ENCODE measurements at regions of chrX and their contacts with region 1.

Region 1: DNA sequence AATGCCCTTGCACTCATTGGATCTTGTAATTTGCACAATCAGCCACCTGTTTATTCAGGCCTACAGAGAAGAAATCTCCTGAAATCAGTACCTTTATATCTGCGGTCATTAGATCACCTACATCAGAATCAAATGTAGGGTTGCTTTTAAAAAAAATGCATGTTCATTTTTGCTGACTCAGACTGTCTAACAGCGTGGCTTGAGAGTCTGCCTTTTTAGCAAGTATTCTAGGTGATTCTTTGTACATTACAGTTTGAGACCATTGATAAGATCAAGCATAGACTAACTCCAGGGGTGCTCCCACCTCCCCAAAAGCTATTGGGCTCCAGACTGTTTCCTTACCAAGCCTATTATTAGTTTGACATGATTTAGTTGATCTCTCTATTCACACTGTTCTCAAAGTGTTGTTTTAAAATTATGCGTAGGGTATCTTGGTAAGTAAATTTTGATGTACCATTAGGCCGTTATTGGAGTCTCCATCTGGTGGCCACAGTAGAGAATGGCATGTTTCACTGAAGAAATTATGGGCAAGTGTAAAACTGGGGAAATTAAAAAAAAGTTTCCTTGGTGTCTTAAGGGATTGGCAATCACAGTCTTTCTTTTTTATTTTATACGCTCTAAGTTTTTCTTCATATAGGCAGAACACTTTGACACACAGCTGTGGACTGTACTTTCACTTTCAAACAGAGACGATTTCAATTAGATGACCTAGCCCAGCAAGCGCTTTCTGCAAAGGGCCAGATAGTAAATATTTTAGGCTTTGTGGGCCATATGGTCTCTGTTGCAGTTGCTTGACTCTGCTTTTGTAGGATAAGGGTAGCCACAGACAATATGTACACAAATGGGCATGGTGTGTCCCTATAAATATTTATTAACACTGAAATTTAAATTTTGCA is 33.7 kb upstream of the MSL3 start:
- DNase-seq: peak in 1 of 2 experiments; percentile 17
- H3K4me3 ChIP-seq: no peak overlapping the region
- H3K4me3 Mint-ChIP-seq: no peak overlapping the region
- H3K27ac Mint-ChIP-seq: no peak overlapping the region
- H3K4me1 ChIP-seq: no peaks in the 10 kb centered on the region
- H3K4me1 Mint-ChIP-seq: no peaks in the 10 kb centered on the region
- H3K27me3 ChIP-seq: no peaks in the 10 kb centered on the region
- H3K27me3 Mint-ChIP-seq: no peaks in the 10 kb centered on the region
- CTCF ChIP-seq: peak; percentile 42 to 53

Region 2: DNA sequence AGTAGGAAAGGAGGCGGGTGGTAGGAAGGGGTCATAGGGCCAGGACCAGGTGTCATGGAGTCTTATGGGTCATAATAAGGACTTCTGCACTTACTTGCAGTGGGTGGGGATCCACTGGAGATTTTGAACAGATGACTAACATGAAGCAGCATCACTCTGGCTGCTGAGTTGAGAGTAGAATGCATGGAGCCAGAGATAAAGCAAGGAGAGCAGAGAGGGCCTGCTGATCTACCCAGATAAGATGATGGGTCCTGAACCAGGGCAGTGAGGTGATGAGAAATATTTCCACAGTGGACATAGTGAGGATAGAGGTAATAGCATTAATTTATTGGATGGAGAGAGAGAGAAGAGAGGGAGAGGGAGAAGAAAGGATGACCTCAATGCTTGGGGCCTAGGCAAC is 565.2 kb before region 1 on chrX:
- CTCF ChIA-PET with region 1: no interaction called
- POLR2A ChIA-PET with region 1: no interaction called
- intact Hi-C with region 1: no loop called
- DNase-seq: no peak
- H3K4me3 ChIP-seq: no peak overlapping the region
- H3K4me3 Mint-ChIP-seq: no peak overlapping the region
- H3K27ac Mint-ChIP-seq: no peak overlapping the region
- H3K4me1 ChIP-seq: no peaks in the 10 kb centered on the region
- H3K4me1 Mint-ChIP-seq: no peaks in the 10 kb centered on the region
- H3K27me3 ChIP-seq: no peaks in the 10 kb centered on the region
- H3K27me3 Mint-ChIP-seq: no peaks in the 10 kb centered on the region
- CTCF ChIP-seq: no peak

Region 3: GRCh38 chrX:11351375-11352295 is 372.7 kb before region 1 on chrX:
- CTCF ChIA-PET with region 1: no interaction called
- POLR2A ChIA-PET with region 1: no interaction called
- intact Hi-C with region 1: no loop called
- DNase-seq: no peak
- H3K4me3 ChIP-seq: no peak overlapping the region
- H3K4me3 Mint-ChIP-seq: no peak overlapping the region
- H3K27ac Mint-ChIP-seq: peak overlapping the region; percentile 73
- H3K4me1 ChIP-seq: peaks cover 18% of the 10 kb centered on the region; the same call in 1 of the 2 replicates
- H3K4me1 Mint-ChIP-seq: peaks cover 9% of the 10 kb centered on the region
- H3K27me3 ChIP-seq: no peaks in the 10 kb centered on the region
- H3K27me3 Mint-ChIP-seq: no peaks in the 10 kb centered on the region
- CTCF ChIP-seq: no peak

Region 4: DNA sequence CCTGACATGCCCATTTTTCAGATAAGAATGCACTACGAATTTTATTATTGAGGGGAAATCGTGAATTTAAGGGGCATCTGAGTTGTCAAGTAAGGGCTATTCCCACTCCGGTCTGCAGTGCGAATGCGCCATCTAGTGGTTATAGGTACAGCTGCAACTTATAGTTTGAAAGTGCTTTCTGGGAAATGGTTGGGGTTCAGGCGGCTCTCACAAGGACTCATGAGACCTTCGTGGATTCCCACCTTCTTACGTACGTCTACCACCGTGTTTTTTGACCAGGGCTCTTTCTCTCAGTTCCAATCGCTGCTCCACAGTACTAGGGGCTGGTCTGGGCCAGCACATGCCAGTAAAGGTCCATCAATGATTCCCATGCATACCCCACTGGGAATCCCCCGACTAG is 46.0 kb after region 1 on chrX:
- CTCF ChIA-PET with region 1: no interaction called
- POLR2A ChIA-PET with region 1: no interaction called
- intact Hi-C with region 1: loop called (anchors 1 kb)
- DNase-seq: peak in 1 of 2 experiments; percentile 22
- H3K4me3 ChIP-seq: no peak overlapping the region
- H3K4me3 Mint-ChIP-seq: no peak overlapping the region
- H3K27ac Mint-ChIP-seq: no peak overlapping the region
- H3K4me1 ChIP-seq: no peaks in the 10 kb centered on the region
- H3K4me1 Mint-ChIP-seq: no peaks in the 10 kb centered on the region
- H3K27me3 ChIP-seq: no peaks in the 10 kb centered on the region
- H3K27me3 Mint-ChIP-seq: no peaks in the 10 kb centered on the region
- CTCF ChIP-seq: peak; percentile 61 to 73

Region 5: DNA sequence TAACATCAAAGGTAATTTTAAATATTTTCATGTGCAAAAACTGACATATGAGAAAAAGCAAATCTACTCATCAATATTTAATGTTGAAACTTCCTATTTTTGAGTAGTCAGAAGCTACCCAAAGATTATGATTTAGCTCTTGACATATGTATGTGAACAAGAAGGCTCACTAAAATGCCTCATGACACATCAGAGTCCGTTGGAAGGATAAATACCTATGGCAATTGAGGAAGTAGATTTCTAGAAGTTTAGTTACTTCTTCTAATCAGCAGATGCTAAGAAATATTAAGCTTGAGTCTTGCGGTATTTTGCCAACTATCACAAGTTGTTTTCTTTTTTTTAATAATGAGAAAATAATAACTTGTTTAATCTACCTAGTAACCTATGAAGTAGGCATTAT is 89.0 kb after region 1 on chrX:
- CTCF ChIA-PET with region 1: no interaction called
- POLR2A ChIA-PET with region 1: interaction called, 10 read pairs
- intact Hi-C with region 1: no loop called
- DNase-seq: no peak
- H3K4me3 ChIP-seq: no peak overlapping the region
- H3K4me3 Mint-ChIP-seq: no peak overlapping the region
- H3K27ac Mint-ChIP-seq: no peak overlapping the region
- H3K4me1 ChIP-seq: no peaks in the 10 kb centered on the region
- H3K4me1 Mint-ChIP-seq: no peaks in the 10 kb centered on the region
- H3K27me3 ChIP-seq: no peaks in the 10 kb centered on the region
- H3K27me3 Mint-ChIP-seq: peaks cover 7% of the 10 kb centered on the region
- CTCF ChIP-seq: no peak